ENCODE measurements at regions of chr11 and their contacts with region 1.

Region 1: DNA sequence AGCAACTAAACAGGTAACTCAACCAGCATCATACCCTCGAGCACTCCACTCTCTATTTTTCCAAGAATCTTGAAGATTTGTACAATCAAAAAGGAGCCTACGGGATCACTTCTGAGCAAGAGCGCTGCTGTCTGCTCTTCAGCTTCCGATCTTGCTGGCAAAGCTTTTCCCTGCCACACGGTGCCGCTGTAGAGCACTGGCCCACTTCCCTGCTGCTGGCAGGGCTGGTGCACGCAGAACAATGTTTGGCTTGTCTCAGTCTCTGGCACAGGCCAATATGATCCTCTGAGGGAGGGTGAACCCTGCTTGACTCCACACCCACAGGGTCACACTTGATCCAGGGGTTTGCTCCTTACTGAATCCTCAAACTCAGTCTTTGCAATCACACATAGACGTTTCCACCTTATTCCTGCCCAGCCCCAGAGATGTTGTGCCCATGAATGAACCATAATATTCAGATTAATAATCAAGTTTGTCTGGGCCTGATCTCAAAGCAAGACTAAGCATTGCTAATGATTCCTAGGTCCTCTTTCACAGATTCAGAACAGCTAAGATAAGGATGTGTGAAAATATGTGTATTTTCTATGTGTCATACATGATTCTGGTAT is 536.6 kb downstream of the SOX6 start:
- DNase-seq: peak in 1 of 2 donors; percentile 74
- H3K4me3 ChIP-seq: no peak overlapping the region
- H3K27ac ChIP-seq: no peak overlapping the region
- H3K4me1 ChIP-seq: peaks cover 0 to 22% of the 10 kb centered on the region in 2 donors
- H3K27me3 ChIP-seq: no peaks in the 10 kb centered on the region
- CTCF ChIP-seq: peak; percentile 54 to 82 (median 67)

Region 2: DNA sequence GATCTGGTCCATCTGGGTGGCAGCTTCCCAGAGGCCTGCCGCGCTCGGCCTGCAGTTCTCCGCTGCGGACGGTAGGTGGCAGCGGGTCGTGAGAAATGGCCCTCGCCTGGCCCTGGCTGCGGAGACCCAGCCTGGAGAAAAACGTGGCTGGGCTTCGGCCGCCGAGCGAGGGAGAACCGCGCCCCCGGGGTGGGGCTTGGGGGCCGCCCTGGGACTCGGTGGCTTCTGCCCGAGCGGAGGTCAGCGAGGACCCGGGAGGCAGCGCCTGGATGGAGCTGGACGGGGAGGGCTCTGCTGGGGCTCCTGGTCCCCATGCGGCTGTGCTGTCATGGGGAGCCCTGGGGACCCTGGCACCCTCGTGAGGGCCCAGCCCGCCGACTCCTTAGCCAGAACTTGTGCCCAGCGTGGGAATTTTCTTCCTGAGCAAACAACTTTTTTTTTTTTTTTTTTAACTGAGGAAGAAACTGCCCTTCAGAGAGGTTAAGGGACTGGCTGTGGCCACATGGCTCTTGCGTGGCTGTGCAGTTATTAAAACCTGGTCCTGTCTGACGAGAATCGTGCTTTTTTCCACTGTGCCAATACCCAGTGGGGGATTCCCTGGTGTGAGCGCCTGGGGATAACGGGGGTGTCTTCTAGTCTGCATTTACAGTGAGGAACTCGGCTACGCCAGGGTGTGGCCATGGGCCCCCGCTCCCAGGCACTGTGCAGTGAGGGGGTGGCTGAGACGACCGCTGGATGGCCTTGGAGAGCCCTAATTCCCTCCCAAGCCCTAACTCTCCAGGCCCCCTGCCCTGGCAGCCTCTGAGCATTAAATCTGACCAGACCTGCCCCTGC is 169.5 kb before region 1 on chr11:
- intact Hi-C with region 1: loop called (anchors 10 kb)
- DNase-seq: peak; percentile 53 to 96
- H3K4me3 ChIP-seq: peak overlapping the region; percentile 59
- H3K27ac ChIP-seq: peak overlapping the region; percentile 39 to 51
- H3K4me1 ChIP-seq: peaks cover 0 to 3% of the 10 kb centered on the region in 2 donors
- H3K27me3 ChIP-seq: no peaks in the 10 kb centered on the region
- CTCF ChIP-seq: peak; percentile 94 to 99 (median 99)

Region 3: GRCh38 chr11:15688351-15688792 is 131.4 kb before region 1 on chr11:
- intact Hi-C with region 1: no loop called
- DNase-seq: no peak
- H3K4me3 ChIP-seq: no peak overlapping the region
- H3K27ac ChIP-seq: no peak overlapping the region
- H3K4me1 ChIP-seq: no peaks in the 10 kb centered on the region
- H3K27me3 ChIP-seq: no peaks in the 10 kb centered on the region
- CTCF ChIP-seq: no peak

Region 4: GRCh38 chr11:15851051-15851498 is 31.3 kb after region 1 on chr11:
- intact Hi-C with region 1: loop called (anchors 2 kb)
- DNase-seq: no peak
- H3K4me3 ChIP-seq: no peak overlapping the region
- H3K27ac ChIP-seq: peak overlapping the region in 1 of 2 donors; percentile 70
- H3K4me1 ChIP-seq: peaks cover 0 to 6% of the 10 kb centered on the region in 2 donors
- H3K27me3 ChIP-seq: no peaks in the 10 kb centered on the region
- CTCF ChIP-seq: no peak

Region 5: DNA sequence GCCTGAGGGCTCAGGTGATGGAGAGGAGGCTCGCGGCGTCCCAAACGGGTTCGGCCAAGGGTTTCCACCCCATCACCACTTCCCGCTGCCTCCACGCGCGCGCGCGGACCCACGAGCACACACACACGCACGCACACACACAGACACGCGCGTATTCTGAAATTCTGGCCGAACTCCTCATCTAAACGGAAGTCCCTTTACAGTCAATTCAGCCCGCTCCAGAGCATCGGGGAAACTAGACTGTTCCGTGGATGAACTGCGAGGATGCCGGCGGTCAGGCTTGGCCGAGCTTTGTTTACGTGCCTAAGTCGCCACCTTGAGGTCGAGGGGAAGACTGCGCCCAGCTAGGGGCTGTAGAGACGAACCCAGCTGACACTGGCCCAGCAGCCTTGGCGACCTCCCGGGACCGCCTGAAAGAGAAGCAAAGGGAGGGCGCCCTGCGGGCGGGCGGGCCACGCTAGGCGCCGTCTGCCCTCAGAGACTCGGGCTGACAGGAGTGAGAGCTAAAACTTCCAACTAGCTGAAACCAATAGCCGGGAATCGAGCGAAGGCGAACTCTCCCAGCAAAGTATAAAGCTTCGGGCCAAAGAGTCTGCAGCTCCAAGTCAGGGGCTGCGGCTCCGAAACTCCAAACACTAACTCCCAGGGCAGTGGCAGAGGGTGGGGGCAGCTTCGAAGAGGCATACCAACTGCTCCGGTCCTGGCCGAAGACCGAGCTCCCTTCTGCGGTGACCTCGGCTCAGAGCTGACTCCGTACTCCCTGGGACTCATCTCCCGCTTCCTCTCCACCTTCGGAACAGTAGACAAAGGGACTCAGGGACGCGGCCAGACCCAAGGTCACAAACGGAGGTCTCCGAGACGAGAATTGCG is 794.0 kb after region 1 on chr11:
- intact Hi-C with region 1: loop called (anchors 5 kb)
- DNase-seq: peak in 1 of 2 donors; percentile 88
- H3K4me3 ChIP-seq: peak overlapping the region; percentile 51 to 61
- H3K27ac ChIP-seq: no peak overlapping the region
- H3K4me1 ChIP-seq: peaks cover 0 to 6% of the 10 kb centered on the region in 2 donors
- H3K27me3 ChIP-seq: peaks cover 5% of the 10 kb centered on the region
- CTCF ChIP-seq: peak; percentile 67 to 92 (median 78)